ENCODE measurements at regions of chr2 and their contacts with region 1.

Region 1: DNA sequence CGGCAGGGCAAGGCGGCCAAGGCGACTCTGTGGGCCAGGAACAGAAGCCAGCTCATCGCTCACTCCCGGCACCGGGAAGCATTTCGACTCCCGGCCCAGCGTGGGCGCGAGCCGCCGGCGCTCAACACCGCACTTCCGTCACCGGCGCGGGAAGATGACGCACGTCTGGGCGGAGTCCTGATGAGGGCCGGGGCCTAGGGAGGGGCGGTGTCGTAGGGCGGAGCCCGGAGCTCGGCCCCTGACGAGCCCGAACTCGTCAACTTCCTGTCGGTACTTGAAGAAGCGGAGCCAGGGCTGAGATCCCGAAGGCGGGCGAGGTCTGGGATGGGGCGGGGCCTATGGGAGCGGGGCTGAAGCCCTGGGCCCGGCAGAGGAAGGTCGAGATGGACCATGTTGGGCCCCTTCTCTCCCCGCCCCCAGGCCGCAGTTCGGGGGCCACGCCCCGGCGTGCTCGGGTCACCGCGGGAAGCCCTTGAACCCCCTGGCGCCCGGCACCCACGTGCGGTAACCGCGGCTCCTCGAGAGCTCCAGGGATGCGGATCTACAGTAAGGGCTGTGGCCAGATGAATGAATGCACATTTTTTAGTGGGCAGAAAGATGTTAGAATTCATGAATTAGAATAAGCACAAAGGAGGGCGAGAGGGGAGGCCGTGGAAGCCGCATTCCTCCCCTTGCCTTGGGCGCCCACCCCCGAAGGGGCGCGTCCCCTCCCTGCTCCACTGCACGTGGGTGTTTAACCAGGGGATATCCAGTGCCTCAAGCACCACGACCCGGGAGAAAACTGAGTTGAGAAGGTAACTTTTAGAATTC is at the start of gene RNASEH1:
- DNase-seq: peak; percentile 98
- H3K4me3 Mint-ChIP-seq: peak within 1 kb of the TSS; percentile 93
- H3K27ac Mint-ChIP-seq: peak within 1 kb of the TSS; percentile 97
- H3K4me1 Mint-ChIP-seq: peaks cover 20% of the 10 kb centered on the region
- H3K27me3 Mint-ChIP-seq: no peaks in the 10 kb centered on the region
- total RNA-seq, gene RNASEH1: 30.5 and 31.6 TPM in 2 replicates

Region 2: GRCh38 chr2:2057125-2057721 is 1501.2 kb before region 1 on chr2:
- intact Hi-C with region 1: loop called (anchors 10 kb)
- DNase-seq: peak; percentile 75
- H3K4me3 Mint-ChIP-seq: peak overlapping the region; percentile 58
- H3K27ac Mint-ChIP-seq: peak overlapping the region; percentile 29
- H3K4me1 Mint-ChIP-seq: peaks cover 14% of the 10 kb centered on the region
- H3K27me3 Mint-ChIP-seq: peaks cover 2% of the 10 kb centered on the region

Region 3: GRCh38 chr2:3223080-3223923 is 335.1 kb before region 1 on chr2:
- intact Hi-C with region 1: loop called (anchors 1 kb)
- DNase-seq: peak; percentile 75
- H3K4me3 Mint-ChIP-seq: peak overlapping the region; percentile 40
- H3K27ac Mint-ChIP-seq: peak overlapping the region; percentile 100
- H3K4me1 Mint-ChIP-seq: peaks cover 61% of the 10 kb centered on the region
- H3K27me3 Mint-ChIP-seq: no peaks in the 10 kb centered on the region

Region 4: GRCh38 chr2:3536682-3537632 is 21.5 kb before region 1 on chr2:
- intact Hi-C with region 1: no loop called
- DNase-seq: no peak
- H3K4me3 Mint-ChIP-seq: peak overlapping the region; percentile 69
- H3K27ac Mint-ChIP-seq: peak overlapping the region; percentile 45
- H3K4me1 Mint-ChIP-seq: peaks cover 5% of the 10 kb centered on the region
- H3K27me3 Mint-ChIP-seq: no peaks in the 10 kb centered on the region

Region 5: GRCh38 chr2:3575534-3576262 is 17.3 kb after region 1 on chr2:
- intact Hi-C with region 1: loop called (anchors 1 kb)
- DNase-seq: peak; percentile 17
- H3K4me3 Mint-ChIP-seq: peak overlapping the region; percentile 99
- H3K27ac Mint-ChIP-seq: peak overlapping the region; percentile 91
- H3K4me1 Mint-ChIP-seq: peaks cover 54% of the 10 kb centered on the region
- H3K27me3 Mint-ChIP-seq: peaks cover 1% of the 10 kb centered on the region